ENCODE measurements at regions of chr3 and their contacts with region 1.

Region 1: GRCh38 chr3:161104561-161105551 is at the start of gene B3GALNT1:
- DNase-seq: peak; percentile 82
- total RNA-seq, gene B3GALNT1: 75.1 TPM

Region 2: DNA sequence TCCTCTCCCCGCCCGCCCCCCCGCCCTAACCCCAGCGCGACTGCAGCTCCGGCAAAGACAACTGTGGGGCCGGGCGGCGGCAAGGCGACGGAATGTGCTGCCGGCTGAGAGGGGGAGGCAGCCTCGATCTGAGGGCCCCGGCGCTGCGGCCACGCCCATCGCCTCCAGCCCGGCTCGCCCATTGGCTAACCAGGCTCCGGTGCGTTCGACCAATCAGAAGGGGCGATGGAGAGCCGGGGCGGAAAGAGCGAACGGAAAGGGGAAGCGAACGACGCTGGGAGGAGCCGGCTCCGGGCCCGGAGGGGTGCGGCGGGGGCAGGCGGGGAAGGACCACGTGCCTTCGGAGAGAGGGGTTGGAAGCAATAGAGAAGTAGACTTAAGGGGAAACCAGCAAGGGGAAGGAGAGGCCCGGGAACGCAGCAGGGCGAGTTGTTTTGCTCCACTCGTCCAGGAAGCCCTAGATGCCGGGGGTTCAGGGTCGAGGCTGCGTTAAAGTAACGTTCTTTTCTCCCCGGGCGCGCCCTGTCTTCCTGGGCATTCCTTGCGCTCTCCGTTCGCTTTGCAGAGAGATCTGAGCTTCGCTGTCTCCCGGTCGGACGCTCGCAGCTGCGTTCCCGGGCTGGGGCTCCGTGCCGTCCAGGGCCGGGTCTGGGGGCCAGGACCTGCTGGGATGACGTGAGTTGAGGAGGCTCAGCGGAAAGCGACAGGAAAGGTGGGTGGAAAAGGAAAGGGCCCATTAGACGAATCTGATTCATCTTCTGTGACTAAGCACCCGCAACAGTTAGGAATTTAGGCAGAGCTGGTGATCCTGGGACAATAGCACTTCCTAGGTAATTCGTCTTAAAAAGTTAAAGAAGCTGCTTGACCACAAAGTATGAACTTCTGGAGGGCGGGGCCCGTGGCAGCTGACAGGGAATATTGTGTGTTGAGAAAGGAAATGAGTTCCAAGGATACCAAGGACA is 539.1 kb before region 1 on chr3 and contains the start of gene KPNA4:
- intact Hi-C with region 1: loop called (anchors 10 kb)
- DNase-seq: peak; percentile 99
- total RNA-seq, gene KPNA4: 144 TPM

Region 3: DNA sequence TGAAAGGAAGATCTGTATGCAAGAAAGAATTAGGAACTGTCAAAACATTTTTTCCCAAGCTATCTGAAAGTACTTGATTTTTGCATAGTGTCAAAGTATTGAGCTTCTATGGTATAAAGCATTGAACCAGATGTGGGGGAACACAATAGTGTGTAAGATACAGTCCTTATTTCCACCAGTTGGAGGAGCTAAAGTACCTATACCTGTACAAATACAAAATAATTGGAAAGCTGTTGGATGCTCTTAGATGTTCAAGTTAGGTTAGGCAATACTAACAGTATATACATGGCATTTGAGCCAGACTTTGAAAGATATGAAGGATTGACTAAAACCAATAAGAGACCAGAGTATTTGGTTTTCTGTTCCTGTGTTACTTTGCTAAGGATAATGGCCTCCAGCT is 148.1 kb before region 1 on chr3:
- intact Hi-C with region 1: loop called (anchors 10 kb)
- DNase-seq: no peak

Region 4: DNA sequence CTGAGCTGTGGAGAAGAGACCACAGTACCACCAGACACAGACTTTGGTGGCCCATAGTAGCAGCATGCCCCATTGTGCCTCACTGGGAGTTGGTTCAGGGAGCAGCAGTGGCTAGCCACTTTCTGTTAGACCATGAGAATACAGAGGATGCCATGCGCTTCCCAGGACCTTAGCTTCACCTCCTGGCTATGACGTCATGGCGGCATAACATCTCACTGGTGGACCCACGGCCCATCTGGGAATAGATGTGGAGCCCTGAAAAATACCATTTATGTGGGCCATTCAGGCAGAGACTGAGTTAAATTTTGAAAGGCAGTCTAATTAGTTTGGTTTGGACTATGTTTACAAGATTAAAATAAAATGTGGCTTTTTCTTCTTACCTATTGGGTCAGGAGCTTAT is 61.2 kb after region 1 on chr3:
- intact Hi-C with region 1: loop called (anchors 5 kb)
- DNase-seq: no peak

Region 5: GRCh38 chr3:161177996-161178395 is 73.1 kb after region 1 on chr3:
- intact Hi-C with region 1: loop called (anchors 5 kb)
- DNase-seq: no peak

Measured in cardiac septum (tissue), 1 donor.